AG04449 (cell line): ENCODE measurements at regions of chr7 and their contacts with region 1.

Region 1: GRCh38 chr7:99525713-99526440 is 21.4 kb downstream of the ZKSCAN5 start:
- DNase-seq: no peak
- H3K4me3 ChIP-seq: no peak overlapping the region
- CTCF ChIP-seq: peak; percentile 7

Region 2: GRCh38 chr7:99021941-99022560 is 503.8 kb before region 1 on chr7:
- CTCF ChIA-PET with region 1: no interaction called
- POLR2A ChIA-PET with region 1: no interaction called
- DNase-seq: no peak
- H3K4me3 ChIP-seq: no peak overlapping the region
- CTCF ChIP-seq: no peak

Region 3: GRCh38 chr7:99498546-99498944 is 27.3 kb before region 1 on chr7:
- CTCF ChIA-PET with region 1: no interaction called
- POLR2A ChIA-PET with region 1: no interaction called
- DNase-seq: no peak
- H3K4me3 ChIP-seq: peak overlapping the region; percentile 93
- CTCF ChIP-seq: no peak

Region 4: GRCh38 chr7:99616359-99617191 is 90.7 kb after region 1 on chr7 and contains the start of gene ZSCAN25:
- CTCF ChIA-PET with region 1: interaction called, 17 read pairs
- POLR2A ChIA-PET with region 1: interaction called, 3 read pairs
- DNase-seq: peak; percentile 58
- H3K4me3 ChIP-seq: peak within 1 kb of the TSS; percentile 92
- CTCF ChIP-seq: peak; percentile 53